Heart left ventricle (tissue), 16 donors: ENCODE measurements at regions of chr7 and their contacts with region 1.

Region 1: DNA sequence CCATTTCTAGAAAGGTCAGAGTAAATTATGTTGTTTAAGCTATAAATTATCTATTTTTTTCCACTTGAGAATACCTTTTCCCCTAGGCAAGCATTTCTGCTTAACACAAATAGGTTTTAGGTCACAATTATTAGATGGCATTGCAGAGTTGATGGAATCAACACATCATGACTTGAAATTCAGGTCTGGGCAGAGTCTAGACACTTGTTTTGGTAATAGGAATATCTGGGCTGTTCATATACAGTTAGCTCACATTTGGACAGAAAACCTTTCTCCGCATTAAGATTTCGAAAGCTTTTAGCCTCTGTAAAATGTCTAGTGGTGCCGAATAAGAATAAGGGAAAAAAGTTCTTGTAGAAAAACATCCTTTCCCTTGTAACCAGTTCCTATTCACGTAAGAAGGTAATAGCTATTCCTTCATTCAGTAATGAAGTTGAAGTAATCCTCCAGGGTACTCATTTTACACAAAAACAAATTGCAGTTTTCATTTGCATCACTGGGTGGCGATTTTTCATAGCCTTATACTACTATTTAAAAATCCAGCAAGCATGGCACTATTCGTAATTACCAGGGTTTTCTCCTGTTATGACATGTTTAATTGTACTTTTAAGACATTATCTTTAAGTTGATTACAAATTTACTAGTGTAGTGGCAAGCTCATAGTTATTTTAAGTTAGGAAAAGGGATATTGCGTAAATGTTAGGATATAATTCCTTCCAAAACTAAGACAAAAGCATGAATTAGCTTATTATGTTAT is 37.0 kb downstream of the RPA3 start:
- DNase-seq: peak in 2 of 5 donors; percentile 61
- ATAC-seq: peak in 3 of 4 donors; percentile 77 to 91 (median 89)
- H3K4me3 ChIP-seq: peak overlapping the region in 4 of 12 donors; percentile 12 to 34 (median 15)
- H3K27ac ChIP-seq: peak overlapping the region; percentile 3 to 69 (median 35)
- H3K4me1 ChIP-seq: peaks cover 0 to 30% (median 21%) of the 10 kb centered on the region in 12 donors
- H3K27me3 ChIP-seq: no peaks in the 10 kb centered on the region
- CTCF ChIP-seq: peak; percentile 47 to 82 (median 71)
- POLR2A ChIP-seq: no peak

Region 2: DNA sequence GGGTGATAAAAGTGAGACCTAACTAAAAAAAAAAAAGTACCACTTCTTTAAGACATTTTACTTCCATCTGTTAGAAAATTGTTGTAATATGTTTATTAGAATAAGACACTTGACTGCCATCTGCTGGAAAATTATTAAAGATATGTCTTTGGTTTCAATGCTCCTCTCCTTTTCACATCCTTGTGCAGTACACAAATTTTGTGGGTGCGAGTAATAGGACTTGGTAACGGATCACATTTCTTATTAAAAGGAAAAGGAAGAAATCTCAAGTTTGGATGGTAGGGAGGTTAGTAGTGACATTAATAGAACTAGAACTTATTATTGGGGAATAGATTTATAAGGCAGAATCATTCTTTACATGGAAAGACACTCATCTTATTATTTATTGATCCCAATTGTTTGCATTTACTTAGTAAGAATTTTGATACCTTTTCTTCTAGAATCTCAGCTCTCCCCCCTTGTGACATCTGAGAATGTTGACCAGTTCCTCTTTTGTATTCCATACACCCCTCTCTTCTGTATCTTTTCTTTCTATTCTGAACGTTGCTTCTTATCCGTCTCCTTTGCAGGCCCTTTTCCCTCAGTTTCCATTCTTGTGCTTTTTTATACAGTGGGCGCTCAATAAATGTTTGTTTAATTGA is 80.1 kb after region 1 on chr7:
- intact Hi-C with region 1: loop called (anchors 1 to 5 kb)
- DNase-seq: no peak
- ATAC-seq: peak; percentile 33 to 66 (median 52)
- H3K4me3 ChIP-seq: peak overlapping the region in 10 of 12 donors; percentile 39 to 61 (median 52)
- H3K27ac ChIP-seq: peak overlapping the region in 11 of 12 donors; percentile 9 to 80 (median 68)
- H3K4me1 ChIP-seq: peaks cover 0 to 17% (median 8%) of the 10 kb centered on the region in 12 donors
- H3K27me3 ChIP-seq: no peaks in the 10 kb centered on the region
- CTCF ChIP-seq: peak; percentile 36 to 67 (median 54)
- POLR2A ChIP-seq: no peak

Region 3: GRCh38 chr7:8189625-8190024 is 508.3 kb after region 1 on chr7:
- intact Hi-C with region 1: loop called in 1 of 10 experiments (anchors 10 kb)
- DNase-seq: no peak
- ATAC-seq: no peak
- H3K4me3 ChIP-seq: no peak overlapping the region
- H3K27ac ChIP-seq: no peak overlapping the region
- H3K4me1 ChIP-seq: peaks cover 0 to 14% (median 0%) of the 10 kb centered on the region in 12 donors
- H3K27me3 ChIP-seq: no peaks in the 10 kb centered on the region
- CTCF ChIP-seq: no peak
- POLR2A ChIP-seq: no peak